ENCODE measurements at regions of chr15 and their contacts with region 1.

Region 1: DNA sequence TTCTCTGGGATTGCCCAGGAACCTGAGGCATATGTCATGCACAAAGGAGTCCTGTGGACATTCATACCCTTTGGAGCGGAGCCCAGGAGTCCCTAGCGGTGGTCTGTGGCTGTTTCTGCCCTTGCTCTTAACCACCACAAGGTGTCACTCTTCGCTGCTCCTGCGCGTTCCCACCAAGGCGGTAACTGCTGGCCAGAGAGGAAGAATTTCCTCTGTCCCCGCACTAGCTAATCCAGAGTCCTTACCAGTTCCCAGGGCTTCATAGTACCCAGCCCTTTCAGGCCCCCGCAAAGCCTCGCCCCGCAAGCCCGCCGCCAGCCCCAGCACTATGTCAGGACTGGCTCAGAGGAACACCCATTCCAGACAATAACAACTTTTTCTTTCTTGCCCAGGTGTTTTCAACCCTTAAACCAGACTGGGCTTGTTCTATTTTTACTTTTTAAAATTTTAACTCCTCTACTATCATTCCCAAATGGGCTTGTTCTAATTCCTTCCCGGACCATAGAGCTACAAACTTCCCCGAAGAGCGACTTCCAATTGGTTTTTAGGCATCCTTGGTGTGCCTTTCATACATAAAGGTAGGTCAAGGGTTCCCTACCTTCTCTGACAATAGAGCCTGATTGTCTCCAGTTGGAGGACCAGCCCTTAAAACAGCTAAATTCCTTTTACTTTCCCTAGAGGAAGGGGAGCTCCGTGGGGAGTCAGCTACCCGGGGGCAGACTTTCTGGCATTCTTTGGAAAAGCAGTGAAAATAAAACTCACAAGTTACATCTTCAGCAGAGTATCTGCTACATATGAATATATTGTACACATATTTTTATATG is 31.8 kb upstream of the ZNF774 start:
- DNase-seq: peak; percentile 78 to 79
- H3K4me3 ChIP-seq: peak overlapping the region in 3 of 4 experiments; percentile 1 to 55 (median 20); a peak in 4 of 8 replicates
- H3K27ac ChIP-seq: no peak overlapping the region
- H3K4me1 ChIP-seq: peaks cover 0 to 3% (median 1%) of the 10 kb centered on the region in 4 experiments; a peak in 3 of 7 replicates
- H3K27me3 ChIP-seq: no peaks in the 10 kb centered on the region
- CTCF ChIP-seq: peak; percentile 95 to 100 (median 99)
- EP300 ChIP-seq: peak in 1 of 2 experiments; percentile 56; a peak in 1 of 3 replicates
- POLR2A ChIP-seq: no peak
- RAD21 ChIP-seq: peak; percentile 99 to 100

Region 2: DNA sequence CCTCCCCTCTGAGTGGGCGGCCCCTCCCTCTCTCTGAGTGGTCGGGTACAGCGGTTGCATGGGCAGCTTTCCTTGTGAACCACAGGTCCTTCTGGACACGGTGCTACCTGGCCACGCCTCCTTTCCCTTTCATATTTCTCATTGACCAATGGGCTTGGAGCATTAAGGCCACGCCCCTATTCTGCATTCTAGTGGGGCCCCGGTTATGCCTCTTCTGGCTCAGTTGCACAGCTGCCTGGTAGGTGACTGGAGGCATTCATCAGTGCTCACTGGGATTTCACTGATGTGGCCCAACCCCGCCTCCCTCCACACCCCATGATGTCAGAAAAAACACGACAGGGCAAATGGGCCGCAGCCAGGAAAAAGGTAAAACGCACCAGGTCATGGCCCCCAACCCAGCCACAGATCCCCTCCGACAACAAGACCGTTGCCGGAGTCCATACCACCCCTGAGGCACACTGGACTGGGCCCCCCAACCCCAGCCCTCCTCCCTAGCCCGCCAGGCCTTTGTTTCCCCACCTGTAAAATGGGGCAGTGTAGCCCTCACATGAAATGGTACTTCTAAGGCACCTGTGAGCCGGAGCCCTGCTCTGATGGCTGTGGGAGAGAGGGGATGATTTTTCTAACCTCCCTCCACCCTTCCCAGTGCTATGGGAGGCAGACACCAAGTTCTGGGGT is 28.5 kb before region 1 on chr15:
- CTCF ChIA-PET with region 1: interaction called, 46 read pairs
- POLR2A ChIA-PET with region 1: no interaction called
- DNase-seq: no peak
- H3K4me3 ChIP-seq: no peak overlapping the region
- H3K27ac ChIP-seq: no peak overlapping the region
- H3K4me1 ChIP-seq: peaks cover 0 to 12% (median 6%) of the 10 kb centered on the region in 4 experiments; a peak in 6 of 7 replicates
- H3K27me3 ChIP-seq: no peaks in the 10 kb centered on the region
- CTCF ChIP-seq: no peak
- EP300 ChIP-seq: no peak
- POLR2A ChIP-seq: no peak
- RAD21 ChIP-seq: no peak

Region 3: DNA sequence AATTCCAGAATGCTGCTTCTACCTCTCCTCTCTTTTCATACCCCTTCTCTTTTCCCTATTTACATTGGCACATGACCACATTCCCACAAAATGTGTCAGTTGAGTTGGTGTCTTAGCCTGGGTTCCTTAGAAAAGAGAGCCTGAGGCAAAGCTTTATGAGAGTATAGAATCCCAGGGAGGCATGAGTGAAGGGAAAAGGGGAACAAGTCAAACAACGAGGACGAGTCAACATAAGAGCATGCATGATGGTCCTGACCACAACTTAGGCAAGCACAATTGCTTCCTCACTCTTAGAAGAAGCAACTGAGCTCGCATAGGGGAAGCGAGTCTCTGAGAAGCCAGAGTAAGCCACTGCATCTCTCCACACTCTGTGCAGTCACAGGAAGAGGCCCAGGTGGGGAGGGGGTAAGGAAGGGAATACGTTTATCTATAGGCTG is 16.4 kb after region 1 on chr15:
- CTCF ChIA-PET with region 1: interaction called, 12 read pairs
- POLR2A ChIA-PET with region 1: interaction called, 3 read pairs
- DNase-seq: no peak
- H3K4me3 ChIP-seq: no peak overlapping the region
- H3K27ac ChIP-seq: no peak overlapping the region
- H3K4me1 ChIP-seq: no peaks in the 10 kb centered on the region
- H3K27me3 ChIP-seq: no peaks in the 10 kb centered on the region
- CTCF ChIP-seq: no peak
- EP300 ChIP-seq: no peak
- POLR2A ChIP-seq: no peak
- RAD21 ChIP-seq: no peak

Region 4: GRCh38 chr15:90387537-90388461 is 67.5 kb after region 1 on chr15 and contains the start of gene IQGAP1:
- CTCF ChIA-PET with region 1: interaction called, 16 read pairs
- POLR2A ChIA-PET with region 1: no interaction called
- DNase-seq: peak; percentile 88 to 97
- H3K4me3 ChIP-seq: peak within 1 kb of the TSS; percentile 55 to 88 (median 84)
- H3K27ac ChIP-seq: peak within 1 kb of the TSS; percentile 62; the same call in 1 of the 2 replicates
- H3K4me1 ChIP-seq: peaks cover 5 to 17% (median 11%) of the 10 kb centered on the region in 4 experiments
- H3K27me3 ChIP-seq: no peaks in the 10 kb centered on the region
- CTCF ChIP-seq: no peak; a peak in 1 of 4 replicates
- EP300 ChIP-seq: 0 out of 3 replicates have a peak, but pooled peaks of 1 of the 2 experiments have one; percentile 56
- POLR2A ChIP-seq: peak; percentile 65 to 73
- RAD21 ChIP-seq: peak; percentile 2 to 7; a peak in 2 of 4 replicates
- total RNA-seq, gene IQGAP1: 133 and 138 TPM in 2 replicates

Region 5: DNA sequence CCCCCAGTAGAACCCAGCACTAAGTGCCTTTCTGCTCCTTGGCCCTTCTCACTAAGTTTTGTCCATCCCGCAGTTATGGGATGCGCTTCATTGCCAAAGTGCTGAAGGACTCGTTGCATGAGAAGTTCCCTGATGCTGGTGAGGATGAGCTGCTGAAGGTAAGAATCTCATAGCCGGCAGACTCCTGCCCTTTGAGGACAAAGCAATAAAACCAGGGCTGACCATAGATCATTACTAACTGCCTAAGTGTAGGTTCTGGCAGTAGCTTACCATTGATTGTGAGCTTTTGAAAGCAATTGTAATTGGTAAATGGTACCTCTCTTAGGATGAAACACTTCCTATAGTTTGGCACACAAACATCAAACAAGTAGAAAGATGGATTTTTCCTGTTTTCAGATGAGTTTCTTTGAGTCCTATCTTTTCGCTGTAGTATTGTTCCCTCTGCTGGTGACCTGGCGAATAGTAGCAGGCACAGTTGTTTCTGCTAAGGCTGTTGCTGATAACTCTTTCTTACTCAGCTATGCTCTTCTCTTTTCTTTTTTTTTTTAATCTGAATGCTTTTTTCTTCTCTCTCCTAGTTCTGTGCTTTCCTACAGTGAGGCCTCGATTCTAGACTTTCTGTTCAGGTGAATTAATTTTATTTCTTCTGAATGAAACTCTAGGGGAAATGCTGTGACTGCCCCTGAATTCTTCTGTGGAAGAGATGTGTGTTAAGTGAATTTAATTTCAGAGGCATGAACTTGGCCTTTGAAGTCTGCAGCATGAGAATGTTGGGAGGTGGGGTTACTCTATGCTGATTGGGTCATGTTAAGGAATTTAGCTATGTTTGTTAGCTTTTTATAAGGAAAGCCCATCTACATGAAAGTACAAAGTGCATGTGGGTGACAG is 162.1 kb after region 1 on chr15:
- CTCF ChIA-PET with region 1: interaction called, 175 read pairs
- POLR2A ChIA-PET with region 1: interaction called, 4 read pairs
- DNase-seq: peak in 1 of 2 experiments; percentile 55
- H3K4me3 ChIP-seq: no peak overlapping the region
- H3K27ac ChIP-seq: no peak overlapping the region
- H3K4me1 ChIP-seq: no peaks in the 10 kb centered on the region
- H3K27me3 ChIP-seq: no peaks in the 10 kb centered on the region
- CTCF ChIP-seq: peak in 2 of 3 experiments; percentile 75; a peak in 3 of 4 replicates
- EP300 ChIP-seq: no peak
- POLR2A ChIP-seq: no peak
- RAD21 ChIP-seq: peak; percentile 93

Region 6: GRCh38 chr15:90529371-90530249 is 209.3 kb after region 1 on chr15 and contains the start of gene CRTC3:
- CTCF ChIA-PET with region 1: interaction called, 10 read pairs
- POLR2A ChIA-PET with region 1: no interaction called
- DNase-seq: peak in 1 of 2 experiments; percentile 75
- H3K4me3 ChIP-seq: peak within 1 kb of the TSS; percentile 55 to 73 (median 68)
- H3K27ac ChIP-seq: no peak within 1 kb of the TSS
- H3K4me1 ChIP-seq: 0 out of 7 replicates have a peak, but pooled peaks cover 0 to 2% (median 0%) of the 10 kb centered on the region in 4 experiments
- H3K27me3 ChIP-seq: peaks cover 7 to 35% (median 29%) of the 10 kb centered on the region in 4 experiments
- CTCF ChIP-seq: no peak
- EP300 ChIP-seq: no peak
- POLR2A ChIP-seq: no peak
- RAD21 ChIP-seq: no peak
- total RNA-seq, gene CRTC3: 5.0 and 5.1 TPM in 2 replicates